ENCODE measurements at regions of chr19 and their contacts with region 1.

Region 1: GRCh38 chr19:6218491-6219162 is 61.1 kb downstream of the MLLT1 start:
- DNase-seq: peak; percentile 82 to 94 (median 91)
- ATAC-seq: peak; percentile 87
- H3K4me3 ChIP-seq: no peak overlapping the region
- H3K4me1 ChIP-seq: peaks cover 6% of the 10 kb centered on the region
- CTCF ChIP-seq: peak; percentile 95

Region 2: DNA sequence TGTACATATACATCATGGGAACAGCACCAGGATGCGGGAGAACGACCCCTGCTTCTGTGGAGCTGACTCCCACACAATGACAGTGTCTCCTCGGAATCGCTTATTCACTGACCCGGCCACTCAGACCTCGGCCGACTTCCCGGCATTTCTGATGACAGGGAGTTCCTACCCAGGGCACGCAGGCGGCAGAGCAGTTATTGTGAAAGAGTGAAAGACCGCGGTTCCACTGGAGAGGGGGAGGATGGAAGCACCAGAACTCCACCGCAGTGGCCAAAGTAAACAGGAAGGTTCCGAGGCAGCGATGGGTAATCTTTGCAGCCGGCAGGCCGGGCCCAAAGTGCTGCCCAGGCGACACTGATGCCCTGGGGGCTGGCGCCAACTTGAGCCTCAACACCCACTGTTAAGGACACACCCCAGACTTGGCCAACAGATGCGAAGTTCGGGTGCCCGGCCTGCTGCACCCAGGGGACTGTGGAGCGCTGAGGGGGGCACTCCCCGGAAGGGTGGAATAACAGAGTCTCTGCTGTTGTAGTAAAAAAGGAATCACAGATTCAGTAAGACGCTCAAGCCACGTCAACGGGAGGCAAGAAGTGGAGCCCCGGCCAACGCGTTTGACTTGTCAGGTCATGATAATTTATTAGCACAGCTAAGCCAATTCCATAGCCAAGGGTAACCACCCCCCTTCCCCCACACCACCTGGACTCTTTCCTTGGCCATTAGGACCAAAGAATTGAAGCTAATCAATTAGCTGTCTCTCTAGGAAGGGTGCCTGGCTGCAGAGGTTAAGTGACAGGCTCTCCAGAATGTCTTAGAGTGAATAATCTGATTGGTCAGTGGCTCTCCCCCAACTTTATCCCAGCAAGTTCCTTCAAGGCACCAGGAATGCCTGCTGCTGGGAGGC is 55.3 kb after region 1 on chr19:
- intact Hi-C with region 1: no loop called
- DNase-seq: peak; percentile 52 to 80 (median 54)
- ATAC-seq: peak; percentile 55
- H3K4me3 ChIP-seq: no peak overlapping the region
- H3K4me1 ChIP-seq: peaks cover 42% of the 10 kb centered on the region
- CTCF ChIP-seq: no peak

Region 3: DNA sequence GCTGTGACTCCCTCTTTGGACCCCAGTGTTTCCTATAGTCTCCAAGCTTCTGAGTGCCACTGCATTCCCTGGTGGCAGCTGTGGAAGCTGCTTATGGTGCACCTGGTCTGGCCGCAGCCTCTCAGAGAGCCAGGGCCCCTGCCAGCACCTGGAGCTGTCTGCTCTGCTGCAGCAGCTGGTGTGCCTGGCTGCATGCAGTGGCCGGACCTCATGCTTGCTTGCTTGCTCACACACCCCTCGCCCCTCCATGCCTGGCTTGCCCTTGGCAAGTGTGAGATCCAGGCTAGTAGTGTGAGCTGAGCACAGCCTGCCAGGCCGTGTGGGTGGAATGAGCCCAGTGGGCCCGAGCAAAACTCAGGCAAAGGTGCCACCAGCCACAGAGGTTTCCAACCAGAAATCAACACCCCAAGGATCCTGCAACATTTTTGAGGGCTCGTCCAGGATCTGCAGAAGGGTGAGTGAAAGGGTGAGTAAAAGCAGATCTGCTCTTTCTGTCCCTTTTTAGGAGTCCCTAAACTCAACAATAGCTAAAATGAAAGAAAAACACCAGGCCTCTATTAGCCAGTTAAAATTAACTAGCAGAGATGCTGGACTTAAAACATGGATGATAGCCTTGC is 68.8 kb after region 1 on chr19:
- intact Hi-C with region 1: loop called in 1 of 2 experiments (anchors 5 kb)
- DNase-seq: no peak
- ATAC-seq: no peak
- H3K4me3 ChIP-seq: no peak overlapping the region
- H3K4me1 ChIP-seq: no peaks in the 10 kb centered on the region
- CTCF ChIP-seq: no peak

Region 4: GRCh38 chr19:6297202-6297601 is 78.6 kb after region 1 on chr19:
- intact Hi-C with region 1: loop called in 1 of 2 experiments (anchors 5 kb)
- DNase-seq: no peak
- ATAC-seq: no peak
- H3K4me3 ChIP-seq: no peak overlapping the region
- H3K4me1 ChIP-seq: no peaks in the 10 kb centered on the region
- CTCF ChIP-seq: no peak